Activated CD4-positive, alpha-beta memory T cell treated with anti-CD3 and anti-CD28 coated beads for 36 hours (primary cell): ENCODE measurements at regions of chr10 and their contacts with region 1.

Region 1: GRCh38 chr10:4849555-4850242 is 23.7 kb downstream of the AKR1E2 start:
- DNase-seq: peak; percentile 93
- H3K4me3 Mint-ChIP-seq: no peak overlapping the region
- H3K27ac Mint-ChIP-seq: no peak overlapping the region
- H3K4me1 Mint-ChIP-seq: peaks cover 3% of the 10 kb centered on the region
- H3K27me3 Mint-ChIP-seq: no peaks in the 10 kb centered on the region

Region 2: DNA sequence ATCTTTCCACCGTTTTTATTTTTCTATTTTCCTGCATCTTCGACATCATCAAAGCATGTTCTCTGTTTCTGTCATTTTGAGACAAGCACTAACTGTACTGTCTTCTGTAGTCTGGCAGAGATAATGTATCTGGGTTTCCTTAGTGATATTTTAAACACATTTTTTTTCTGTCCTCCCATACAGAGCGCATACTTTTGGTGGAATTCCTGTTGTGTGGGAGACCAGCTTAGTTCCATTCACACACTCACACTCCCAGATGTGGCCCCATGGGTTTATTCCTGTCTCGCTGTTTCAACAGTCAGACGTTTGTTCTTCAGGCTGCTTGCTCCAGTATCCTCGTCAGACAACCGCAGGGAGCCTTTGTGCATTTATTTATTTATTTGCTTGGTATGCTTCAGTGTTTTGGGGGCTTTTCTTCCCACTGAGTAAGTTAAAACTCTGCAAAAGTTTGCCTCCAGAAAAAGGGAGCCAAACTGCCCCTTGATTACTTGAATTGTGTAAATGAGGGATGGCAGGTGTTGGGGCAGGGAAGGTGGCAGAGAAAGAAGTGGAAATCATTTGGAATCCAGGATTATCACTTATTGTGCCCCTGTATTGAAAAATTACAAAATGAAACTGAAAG is 607.9 kb before region 1 on chr10:
- CTCF ChIA-PET with region 1: no interaction called
- POLR2A ChIA-PET with region 1: no interaction called
- intact Hi-C with region 1: no loop called
- DNase-seq: no peak
- H3K4me3 Mint-ChIP-seq: no peak overlapping the region
- H3K27ac Mint-ChIP-seq: no peak overlapping the region
- H3K4me1 Mint-ChIP-seq: peaks cover 32% of the 10 kb centered on the region
- H3K27me3 Mint-ChIP-seq: no peaks in the 10 kb centered on the region

Region 3: DNA sequence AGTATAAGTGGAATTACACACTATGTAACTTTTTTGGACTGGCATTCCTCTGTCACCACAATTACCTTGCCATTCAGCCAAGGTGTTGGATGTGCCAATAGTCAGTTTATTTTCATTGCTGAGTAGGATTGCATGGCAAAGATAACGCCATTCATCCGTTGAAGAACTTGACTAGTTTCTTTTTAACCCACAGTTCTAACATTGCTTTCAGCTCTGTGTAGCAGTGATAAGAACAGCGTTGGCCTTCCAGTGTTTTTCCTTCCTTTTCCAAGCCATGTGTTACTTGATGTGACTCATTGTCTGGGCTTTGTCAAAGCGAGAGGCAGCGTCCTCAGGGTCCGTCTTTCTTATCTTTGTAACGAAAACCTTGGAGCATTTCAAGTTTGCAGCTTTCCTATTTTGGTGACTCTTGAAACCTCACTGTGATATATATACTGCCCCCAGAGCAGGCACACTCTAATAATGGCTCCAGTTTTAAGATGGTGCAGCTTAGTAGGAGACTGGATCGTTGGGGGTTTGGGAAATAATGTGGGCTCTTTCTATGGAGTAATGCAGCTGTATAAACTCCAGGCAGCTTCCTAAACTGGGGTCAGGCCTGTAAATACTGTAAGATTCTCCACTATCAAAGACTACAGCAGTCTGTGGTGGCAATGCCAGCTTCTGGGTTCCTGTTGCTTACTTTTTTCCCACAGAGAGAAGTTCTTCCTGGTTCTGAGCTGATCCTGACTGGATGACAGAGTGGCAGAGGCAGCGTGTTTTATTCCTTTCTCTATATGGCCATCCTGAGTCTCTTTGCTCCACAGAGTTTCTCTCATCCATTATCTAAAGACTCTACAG is 18.0 kb after region 1 on chr10:
- CTCF ChIA-PET with region 1: interaction called, 14 read pairs
- POLR2A ChIA-PET with region 1: no interaction called
- intact Hi-C with region 1: no loop called
- DNase-seq: no peak
- H3K4me3 Mint-ChIP-seq: no peak overlapping the region
- H3K27ac Mint-ChIP-seq: no peak overlapping the region
- H3K4me1 Mint-ChIP-seq: peaks cover 11% of the 10 kb centered on the region
- H3K27me3 Mint-ChIP-seq: no peaks in the 10 kb centered on the region

Region 4: GRCh38 chr10:5094265-5095205 is 244.8 kb after region 1 on chr10 and contains the start of gene AKR1C3:
- CTCF ChIA-PET with region 1: interaction called, 17 read pairs
- POLR2A ChIA-PET with region 1: no interaction called
- intact Hi-C with region 1: loop called (anchors 2 kb)
- DNase-seq: no peak
- H3K4me3 Mint-ChIP-seq: peak within 1 kb of the TSS; percentile 47
- H3K27ac Mint-ChIP-seq: no peak within 1 kb of the TSS
- H3K4me1 Mint-ChIP-seq: peaks cover 11% of the 10 kb centered on the region
- H3K27me3 Mint-ChIP-seq: peaks cover 13% of the 10 kb centered on the region
- total RNA-seq, gene AKR1C3: 0.33 to 0.70 TPM

Region 5: DNA sequence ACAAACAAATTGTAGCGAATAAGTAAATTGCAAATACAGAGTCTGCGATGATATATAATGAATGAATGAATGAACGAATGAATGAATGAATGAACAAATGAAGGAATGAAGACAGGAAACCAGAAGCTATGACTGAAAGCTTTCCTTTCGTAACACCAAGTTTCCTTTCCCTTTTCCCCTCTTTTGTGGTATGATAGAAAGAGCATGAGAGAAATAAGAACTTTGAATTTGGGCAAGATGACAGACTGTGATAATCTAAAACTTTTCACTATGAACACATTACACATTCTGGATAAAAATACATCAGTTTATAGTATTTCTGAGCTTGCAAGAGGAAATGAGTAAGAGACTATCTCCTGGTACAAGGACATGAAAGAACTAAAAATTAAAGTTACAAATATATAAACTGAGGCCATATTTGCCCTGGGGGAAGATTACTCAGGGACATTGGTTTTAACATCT is 506.6 kb after region 1 on chr10:
- CTCF ChIA-PET with region 1: interaction called, 10 read pairs
- POLR2A ChIA-PET with region 1: no interaction called
- intact Hi-C with region 1: no loop called
- DNase-seq: no peak
- H3K4me3 Mint-ChIP-seq: no peak overlapping the region
- H3K27ac Mint-ChIP-seq: no peak overlapping the region
- H3K4me1 Mint-ChIP-seq: peaks cover 14% of the 10 kb centered on the region
- H3K27me3 Mint-ChIP-seq: peaks cover 4% of the 10 kb centered on the region

Region 6: DNA sequence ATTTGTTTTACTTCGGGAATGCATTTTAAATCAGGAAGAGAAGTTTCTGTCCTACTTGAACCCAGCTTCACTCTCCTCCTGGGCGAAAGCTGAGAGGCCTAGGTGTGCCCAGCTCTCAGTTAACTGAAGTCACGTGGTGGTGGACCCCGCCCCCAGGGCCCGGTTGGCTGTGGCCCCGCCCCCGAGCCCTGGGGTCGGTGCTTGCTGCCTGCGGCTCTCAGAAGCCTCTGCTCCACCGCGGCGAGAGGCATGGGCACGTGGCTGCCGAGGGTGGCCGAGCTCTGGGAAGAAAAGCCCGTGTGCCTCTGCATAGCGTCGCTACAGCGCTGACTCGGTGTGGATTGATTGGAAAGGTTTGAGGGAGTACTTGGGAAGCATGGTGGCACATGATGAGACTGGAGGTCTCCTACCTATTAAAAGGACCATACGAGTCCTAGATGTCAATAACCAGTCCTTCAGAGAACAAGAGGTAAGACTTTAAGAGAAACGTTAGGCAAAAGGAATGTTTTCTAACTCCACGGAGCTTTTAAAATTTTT is 596.8 kb after region 1 on chr10:
- CTCF ChIA-PET with region 1: interaction called, 10 read pairs
- POLR2A ChIA-PET with region 1: no interaction called
- intact Hi-C with region 1: no loop called
- DNase-seq: peak; percentile 74
- H3K4me3 Mint-ChIP-seq: peak overlapping the region; percentile 65
- H3K27ac Mint-ChIP-seq: peak overlapping the region; percentile 3
- H3K4me1 Mint-ChIP-seq: peaks cover 45% of the 10 kb centered on the region
- H3K27me3 Mint-ChIP-seq: no peaks in the 10 kb centered on the region